SK-N-SH (cell line): ENCODE measurements at regions of chr2 and their contacts with region 1.

Region 1: DNA sequence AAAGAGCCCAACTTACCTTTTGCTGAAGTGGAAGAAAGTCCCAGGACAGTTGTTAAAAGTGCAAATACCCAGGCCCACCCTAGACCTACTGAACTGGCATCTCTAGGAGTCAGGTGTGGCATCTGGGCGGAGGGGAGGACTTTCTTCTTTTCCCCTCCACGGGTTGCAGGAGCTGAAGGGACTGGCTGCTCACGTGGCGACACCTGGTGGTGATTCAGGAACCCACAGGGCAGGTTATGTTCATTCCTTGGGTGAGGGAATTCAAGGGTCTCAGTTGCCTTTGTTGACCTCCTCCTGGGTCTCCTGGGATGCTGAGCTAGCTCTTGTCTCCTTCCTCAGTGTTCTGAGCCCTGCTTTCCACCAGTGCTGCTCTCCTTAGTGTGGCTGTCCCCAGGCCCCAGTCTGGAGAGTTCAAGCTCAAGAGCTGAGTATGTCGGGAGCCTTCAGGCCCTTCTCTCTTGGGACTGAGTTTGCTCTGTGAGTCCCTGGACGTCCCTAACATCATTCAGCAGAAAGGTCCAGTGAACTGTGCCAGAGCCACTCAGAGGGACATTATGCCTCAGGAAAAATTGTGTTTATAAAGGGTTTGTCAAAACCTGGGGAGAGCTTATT is 56.9 kb downstream of the DYSF start:
- DNase-seq: peak; percentile 87
- H3K4me3 ChIP-seq: no peak overlapping the region; a peak in 1 of 4 replicates
- H3K27ac ChIP-seq: no peak overlapping the region
- H3K4me1 ChIP-seq: peaks cover 0 to 6% of the 10 kb centered on the region in 2 experiments; a peak in 1 of 4 replicates
- H3K27me3 ChIP-seq: peaks cover 5% of the 10 kb centered on the region; the same call in 1 of the 2 replicates
- CTCF ChIP-seq: peak; percentile 87
- EP300 ChIP-seq: no peak
- RAD21 ChIP-seq: peak; percentile 85

Region 2: GRCh38 chr2:71157124-71157793 is 353.0 kb before region 1 on chr2:
- CTCF ChIA-PET with region 1: interaction called, 39 read pairs
- POLR2A ChIA-PET with region 1: no interaction called
- DNase-seq: peak; percentile 83
- H3K4me3 ChIP-seq: peak overlapping the region in 1 of 2 experiments; percentile 55; a peak in 1 of 4 replicates
- H3K27ac ChIP-seq: no peak overlapping the region
- H3K4me1 ChIP-seq: peaks cover 0 to 9% of the 10 kb centered on the region in 2 experiments; a peak in 1 of 4 replicates
- H3K27me3 ChIP-seq: peaks cover 5% of the 10 kb centered on the region; the same call in 1 of the 2 replicates
- CTCF ChIP-seq: peak; percentile 76
- EP300 ChIP-seq: no peak
- RAD21 ChIP-seq: peak; percentile 78

Region 3: DNA sequence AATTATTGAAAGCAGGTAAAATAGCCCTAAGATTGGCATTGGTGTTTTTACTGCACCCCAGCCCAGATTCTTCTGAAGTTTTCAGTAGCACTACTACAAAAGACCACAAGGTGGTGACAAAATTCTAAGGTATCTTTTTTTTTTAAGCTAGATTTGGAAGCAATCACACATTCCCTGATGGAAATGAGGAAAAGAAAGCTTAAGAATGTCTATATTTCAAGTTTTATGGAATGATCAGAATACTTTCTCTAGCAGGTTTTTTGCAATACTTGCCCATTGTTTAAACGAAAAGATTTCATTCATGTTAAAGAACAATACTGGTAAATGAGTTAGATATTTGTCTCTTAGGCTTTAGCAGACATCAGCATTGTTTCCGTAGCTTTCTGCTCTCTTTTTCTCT is 210.8 kb before region 1 on chr2:
- CTCF ChIA-PET with region 1: interaction called, 221 read pairs
- POLR2A ChIA-PET with region 1: no interaction called
- DNase-seq: peak; percentile 51
- H3K4me3 ChIP-seq: no peak overlapping the region; a peak in 1 of 4 replicates
- H3K27ac ChIP-seq: no peak overlapping the region
- H3K4me1 ChIP-seq: no peaks in the 10 kb centered on the region
- H3K27me3 ChIP-seq: no peaks in the 10 kb centered on the region
- CTCF ChIP-seq: peak; percentile 78
- EP300 ChIP-seq: no peak
- RAD21 ChIP-seq: peak; percentile 79

Region 4: DNA sequence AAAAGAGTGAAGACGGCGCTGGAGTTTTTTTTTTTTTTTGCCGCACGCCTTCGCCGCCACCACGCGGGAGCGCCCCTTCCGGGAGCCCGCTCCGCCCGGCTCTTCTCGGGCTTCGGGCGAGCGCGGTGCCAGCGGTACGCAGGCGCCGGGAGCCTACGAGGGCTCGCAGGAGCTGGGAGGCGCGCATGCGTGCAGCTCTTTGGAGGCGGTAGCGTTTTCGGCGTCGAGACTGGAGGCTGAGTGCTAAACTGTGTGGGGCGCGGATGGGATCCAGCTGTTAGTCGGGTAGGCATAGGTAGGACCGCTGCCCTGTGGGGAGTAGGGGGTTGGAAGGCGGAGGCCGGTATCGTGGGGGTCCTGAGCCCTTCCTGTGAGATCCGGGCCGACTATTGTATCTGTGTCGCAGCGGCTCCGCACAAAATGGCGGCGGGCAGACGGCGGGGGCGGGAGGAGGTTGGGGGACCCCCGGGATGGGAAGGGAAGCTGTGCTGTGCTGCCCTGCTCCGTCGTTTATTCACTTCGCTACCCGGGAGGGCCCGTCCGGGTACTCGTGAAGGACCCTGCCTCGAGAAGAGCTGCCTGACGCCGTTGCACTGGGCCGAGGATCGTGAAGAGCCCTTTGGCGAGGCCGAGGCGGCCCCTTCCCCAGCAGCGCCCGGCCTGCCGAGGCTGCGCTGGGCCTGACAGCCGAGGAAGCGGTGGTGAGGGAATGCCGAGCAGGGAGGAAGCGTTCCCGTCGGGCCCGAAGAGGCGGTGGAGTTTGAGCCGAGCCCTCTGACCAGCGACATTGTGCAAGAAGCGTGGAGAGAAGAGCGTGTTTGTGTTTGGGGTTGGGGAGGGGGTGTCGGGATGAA is 178.5 kb before region 1 on chr2 and contains the start of gene ZNF638:
- CTCF ChIA-PET with region 1: interaction called, 12 read pairs
- POLR2A ChIA-PET with region 1: interaction called, 3 read pairs
- DNase-seq: peak; percentile 97
- H3K4me3 ChIP-seq: peak within 1 kb of the TSS; percentile 91 to 94
- H3K27ac ChIP-seq: peak within 1 kb of the TSS; percentile 76 to 97
- H3K4me1 ChIP-seq: peaks cover 0 to 12% of the 10 kb centered on the region in 2 experiments; a peak in 3 of 4 replicates
- H3K27me3 ChIP-seq: no peaks in the 10 kb centered on the region
- CTCF ChIP-seq: peak; percentile 71
- EP300 ChIP-seq: no peak
- RAD21 ChIP-seq: peak; percentile 50
- polyA plus RNA-seq, gene ZNF638: 28.1 and 32.2 TPM in 2 replicates

Region 5: GRCh38 chr2:71460595-71461303 is 49.6 kb before region 1 on chr2:
- CTCF ChIA-PET with region 1: interaction called, 108 read pairs
- POLR2A ChIA-PET with region 1: no interaction called
- DNase-seq: peak; percentile 74
- H3K4me3 ChIP-seq: no peak overlapping the region
- H3K27ac ChIP-seq: no peak overlapping the region
- H3K4me1 ChIP-seq: peaks cover 0 to 32% of the 10 kb centered on the region in 2 experiments; a peak in 1 of 4 replicates
- H3K27me3 ChIP-seq: peaks cover 17% of the 10 kb centered on the region
- CTCF ChIP-seq: peak; percentile 73
- EP300 ChIP-seq: no peak
- RAD21 ChIP-seq: peak; percentile 47

Region 6: GRCh38 chr2:71498261-71498701 is 12.0 kb before region 1 on chr2:
- CTCF ChIA-PET with region 1: interaction called, 37 read pairs
- POLR2A ChIA-PET with region 1: no interaction called
- DNase-seq: no peak
- H3K4me3 ChIP-seq: no peak overlapping the region
- H3K27ac ChIP-seq: peak overlapping the region in 1 of 2 experiments; percentile 47; a peak in 1 of 4 replicates
- H3K4me1 ChIP-seq: no peaks in the 10 kb centered on the region; a peak in 1 of 4 replicates
- H3K27me3 ChIP-seq: no peaks in the 10 kb centered on the region
- CTCF ChIP-seq: no peak
- EP300 ChIP-seq: no peak
- RAD21 ChIP-seq: no peak